Mammary epithelial cell (primary cell): ENCODE measurements at regions of chr17 and their contacts with region 1.

Region 1: GRCh38 chr17:37781451-37781850 is 36.6 kb upstream of the HNF1B start:
- DNase-seq: no peak
- H3K4me3 ChIP-seq: no peak overlapping the region
- H3K27ac ChIP-seq: no peak overlapping the region
- H3K4me1 ChIP-seq: no peaks in the 10 kb centered on the region
- H3K27me3 ChIP-seq: no peaks in the 10 kb centered on the region
- CTCF ChIP-seq: no peak

Region 2: GRCh38 chr17:37637956-37638355 is 143.5 kb before region 1 on chr17:
- CTCF ChIA-PET with region 1: no interaction called
- dilution Hi-C with region 1: loop called (anchors 5 kb)
- in situ Hi-C with region 1: loop called in 1 of 2 experiments (anchors 10 kb)
- intact Hi-C with region 1: no loop called
- DNase-seq: no peak
- H3K4me3 ChIP-seq: no peak overlapping the region
- H3K27ac ChIP-seq: no peak overlapping the region
- H3K4me1 ChIP-seq: no peaks in the 10 kb centered on the region
- H3K27me3 ChIP-seq: no peaks in the 10 kb centered on the region
- CTCF ChIP-seq: no peak